Mucosa of descending colon (tissue), 3 donors: ENCODE measurements at regions of chr9 and their contacts with region 1.

Region 1: GRCh38 chr9:32968101-32969011 is 33.1 kb downstream of the APTX start:
- DNase-seq: peak in 2 of 3 donors; percentile 49 to 79
- ATAC-seq: no peak
- H3K4me3 ChIP-seq: no peak overlapping the region
- H3K4me1 ChIP-seq: no peaks in the 10 kb centered on the region
- CTCF ChIP-seq: peak; percentile 49

Region 2: DNA sequence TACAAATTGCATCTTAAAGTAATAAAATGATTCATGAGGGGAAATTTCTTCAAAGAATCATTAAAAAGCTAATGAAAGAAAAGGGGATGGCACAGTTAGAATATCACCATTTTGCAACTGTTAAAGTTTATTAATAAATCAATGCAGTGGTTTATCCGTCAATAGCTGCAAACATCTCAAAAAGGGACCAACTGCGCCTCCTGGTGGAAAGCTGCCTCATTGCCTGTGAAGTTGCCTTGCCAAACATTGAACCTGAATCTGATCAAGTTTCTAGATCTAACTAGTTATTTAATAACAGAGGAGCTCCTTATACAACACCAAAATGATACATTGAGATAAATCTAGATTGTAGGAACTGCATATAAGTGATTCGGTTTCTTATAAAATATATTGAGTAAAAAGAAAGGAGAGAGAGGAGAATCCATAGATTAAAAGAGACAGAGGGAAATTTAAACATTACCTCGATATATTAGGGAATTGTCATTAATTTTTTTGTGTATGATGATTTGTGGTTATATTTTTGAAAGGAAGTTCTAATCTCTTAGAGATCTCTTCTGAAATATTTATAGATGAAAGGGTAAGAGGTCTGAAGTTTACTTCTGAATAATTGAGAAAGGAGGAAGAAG is 388.5 kb before region 1 on chr9:
- intact Hi-C with region 1: loop called (anchors 5 to 10 kb)
- DNase-seq: peak in 2 of 3 donors; percentile 78 to 88
- ATAC-seq: peak; percentile 56
- H3K4me3 ChIP-seq: no peak overlapping the region
- H3K4me1 ChIP-seq: no peaks in the 10 kb centered on the region
- CTCF ChIP-seq: peak; percentile 82

Region 3: GRCh38 chr9:32589083-32589723 is 379.2 kb before region 1 on chr9:
- intact Hi-C with region 1: loop called (anchors 5 to 10 kb)
- DNase-seq: no peak
- ATAC-seq: peak; percentile 54
- H3K4me3 ChIP-seq: no peak overlapping the region
- H3K4me1 ChIP-seq: no peaks in the 10 kb centered on the region
- CTCF ChIP-seq: no peak

Region 4: DNA sequence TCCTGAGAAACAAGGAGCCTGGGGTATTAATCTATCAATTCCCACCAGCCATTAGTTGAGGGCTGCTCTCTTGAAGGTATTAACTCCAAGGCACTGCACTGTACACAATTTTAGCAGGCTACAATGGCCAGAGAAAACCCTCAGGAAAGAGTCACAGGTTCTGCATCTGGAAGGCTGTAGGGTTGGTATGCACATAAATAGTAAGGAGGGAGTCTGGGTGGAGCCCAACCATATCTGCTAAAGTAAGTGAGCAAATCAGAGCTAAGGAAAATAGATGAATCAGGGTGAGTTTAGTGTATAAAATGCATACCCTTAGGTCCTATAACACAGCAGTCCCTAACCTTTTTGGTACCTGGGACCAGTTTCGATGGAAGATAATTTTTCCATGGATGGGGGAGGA is 166.8 kb before region 1 on chr9:
- intact Hi-C with region 1: no loop called
- DNase-seq: no peak
- ATAC-seq: no peak
- H3K4me3 ChIP-seq: no peak overlapping the region
- H3K4me1 ChIP-seq: no peaks in the 10 kb centered on the region
- CTCF ChIP-seq: no peak

Region 5: DNA sequence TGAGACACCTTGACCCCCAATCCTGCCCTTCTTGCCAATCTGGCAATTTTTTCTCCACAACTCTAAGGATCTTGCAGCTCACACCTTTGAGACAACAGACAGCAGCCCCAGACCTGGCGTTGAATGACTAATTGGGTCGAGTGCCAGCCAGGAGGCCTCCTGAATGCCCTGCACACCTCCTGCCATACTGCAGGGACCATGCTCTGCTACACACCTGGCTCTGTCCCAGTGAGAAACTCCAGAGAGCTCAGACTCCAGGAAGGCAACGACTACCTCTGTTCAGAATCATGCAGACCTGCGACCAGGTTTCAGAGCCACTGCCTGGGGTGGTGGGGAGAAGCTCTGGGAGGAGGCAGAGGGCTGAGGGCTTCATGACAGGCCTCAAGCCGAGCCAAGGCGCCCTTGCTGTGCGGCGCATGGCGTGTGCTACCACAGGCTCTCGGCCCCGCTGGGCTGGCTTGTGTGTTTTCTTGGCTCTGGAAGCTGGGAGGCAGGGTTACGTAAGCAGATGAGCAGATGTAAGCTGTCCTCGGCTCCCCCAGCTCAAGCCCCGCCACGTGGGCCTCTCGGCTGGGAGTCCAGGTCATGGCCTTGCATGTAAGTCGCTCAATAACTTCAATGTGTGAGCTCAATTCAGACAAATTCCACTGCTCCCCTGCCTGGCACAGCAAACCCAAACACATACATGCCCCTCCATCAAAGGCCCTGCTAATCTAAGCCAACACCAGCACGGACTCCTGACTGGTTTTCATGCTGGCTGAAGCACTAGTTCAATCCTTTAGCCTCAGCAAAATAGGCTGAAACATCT is 171.3 kb after region 1 on chr9:
- intact Hi-C with region 1: no loop called
- DNase-seq: peak; percentile 52 to 77 (median 54)
- ATAC-seq: peak; percentile 35
- H3K4me3 ChIP-seq: no peak overlapping the region
- H3K4me1 ChIP-seq: peaks cover 37% of the 10 kb centered on the region
- CTCF ChIP-seq: no peak

Region 6: DNA sequence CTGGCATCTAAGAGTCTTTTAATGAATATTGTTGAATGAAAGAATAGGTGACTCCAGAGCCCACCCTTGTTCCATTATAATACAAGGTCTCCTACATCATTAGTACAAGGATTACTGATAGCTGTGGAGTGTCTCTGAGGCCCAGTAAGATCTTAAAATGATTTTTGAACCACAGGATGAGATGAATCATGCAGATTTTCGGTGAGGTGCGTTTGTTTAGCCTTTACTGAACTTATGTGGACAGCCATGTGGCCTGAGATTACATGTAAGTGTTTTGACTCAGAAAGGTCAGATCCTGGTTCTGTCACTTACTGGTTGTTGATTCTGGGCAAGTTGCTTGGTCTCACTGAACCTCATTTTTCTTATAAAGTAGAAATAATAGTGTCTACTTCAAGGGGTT is 343.6 kb after region 1 on chr9:
- intact Hi-C with region 1: no loop called
- DNase-seq: no peak
- ATAC-seq: no peak
- H3K4me3 ChIP-seq: no peak overlapping the region
- H3K4me1 ChIP-seq: no peaks in the 10 kb centered on the region
- CTCF ChIP-seq: no peak